ENCODE measurements at regions of chr13 and their contacts with region 1.

Region 1: GRCh38 chr13:22061351-22061805 is 390.5 kb downstream of the FGF9 start:
- DNase-seq: peak; percentile 51
- ATAC-seq: peak; percentile 83
- H3K4me3 ChIP-seq: no peak overlapping the region
- H3K27ac ChIP-seq: peak overlapping the region; percentile 94
- H3K4me1 ChIP-seq: peaks cover 25% of the 10 kb centered on the region
- H3K27me3 ChIP-seq: no peaks in the 10 kb centered on the region
- CTCF ChIP-seq: peak; percentile 15 to 50 (median 41); a peak in 3 of 6 replicates
- EP300 ChIP-seq: peak; percentile 5 to 80; a peak in 3 of 4 replicates
- POLR2A ChIP-seq: peak; percentile 36; the same call in 1 of the 2 replicates
- RAD21 ChIP-seq: peak; percentile 63

Region 2: DNA sequence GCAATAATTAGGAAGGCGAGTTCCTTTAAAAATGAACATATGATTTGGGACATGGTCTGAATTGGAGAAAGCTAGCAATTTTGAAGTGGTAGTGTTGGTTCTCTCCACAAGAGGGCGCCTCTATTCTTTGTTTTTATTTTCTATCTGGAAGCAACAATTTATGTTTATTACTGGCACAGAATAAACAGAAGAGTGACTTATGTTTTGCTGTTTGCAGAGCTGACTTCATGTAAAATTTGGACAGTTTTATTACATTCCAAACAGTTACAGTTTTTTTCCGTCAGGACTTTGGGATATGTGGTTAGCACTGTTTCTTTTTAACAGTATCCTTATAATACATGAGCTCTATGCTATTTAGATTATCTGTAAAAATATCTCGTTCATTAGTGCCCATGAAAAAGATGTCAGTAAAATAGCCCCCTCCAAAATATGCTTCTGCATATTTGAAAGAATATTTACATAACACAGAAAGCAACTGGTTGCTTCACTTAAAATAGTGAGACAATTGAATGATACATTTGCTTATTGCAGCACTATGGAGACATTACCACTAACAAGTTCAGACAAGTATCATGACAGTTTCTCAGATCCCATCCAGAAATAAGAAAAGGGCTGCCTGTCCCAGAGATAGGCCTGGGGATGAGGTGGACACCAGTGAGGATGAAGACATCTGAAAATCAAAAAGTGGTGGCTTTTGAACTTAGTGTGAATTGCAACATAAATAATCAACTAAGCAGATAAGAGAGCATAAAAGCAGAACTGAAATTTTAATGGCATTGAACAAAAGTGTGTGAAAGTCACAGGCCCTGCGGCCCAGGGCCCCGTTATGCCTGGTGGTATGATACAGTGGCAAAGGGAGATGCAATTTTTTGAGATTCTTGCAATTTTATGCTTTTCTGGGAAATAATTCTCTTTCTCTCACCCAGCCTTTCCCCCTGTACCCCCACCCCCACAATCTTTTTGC is 422.8 kb before region 1 on chr13:
- CTCF ChIA-PET with region 1: interaction called, 19 read pairs
- POLR2A ChIA-PET with region 1: no interaction called
- RAD21 ChIA-PET with region 1: interaction called, 8 read pairs
- SMC1A ChIA-PET with region 1: interaction called, 14 read pairs
- in situ Hi-C with region 1: no loop called
- intact Hi-C with region 1: loop called (anchors 2 kb)
- DNase-seq: no peak
- ATAC-seq: peak; percentile 79
- H3K4me3 ChIP-seq: no peak overlapping the region
- H3K27ac ChIP-seq: no peak overlapping the region
- H3K4me1 ChIP-seq: no peaks in the 10 kb centered on the region
- H3K27me3 ChIP-seq: no peaks in the 10 kb centered on the region
- CTCF ChIP-seq: peak; percentile 58 to 67 (median 65)
- EP300 ChIP-seq: no peak
- POLR2A ChIP-seq: no peak
- RAD21 ChIP-seq: peak; percentile 78

Region 3: GRCh38 chr13:21670883-21671619 is 390.3 kb before region 1 on chr13 and contains the start of gene FGF9:
- CTCF ChIA-PET with region 1: no interaction called
- POLR2A ChIA-PET with region 1: no interaction called
- RAD21 ChIA-PET with region 1: no interaction called
- SMC1A ChIA-PET with region 1: no interaction called
- in situ Hi-C with region 1: no loop called
- intact Hi-C with region 1: loop called (anchors 5 kb)
- DNase-seq: peak; percentile 7
- ATAC-seq: peak; percentile 92
- H3K4me3 ChIP-seq: peak within 1 kb of the TSS; percentile 75
- H3K27ac ChIP-seq: no peak within 1 kb of the TSS
- H3K4me1 ChIP-seq: peaks cover 23% of the 10 kb centered on the region
- H3K27me3 ChIP-seq: peaks cover 15 to 31% of the 10 kb centered on the region in 2 experiments
- CTCF ChIP-seq: 0 out of 6 replicates have a peak, but pooled peaks of 1 of the 3 experiments have one; percentile 6
- EP300 ChIP-seq: no peak
- POLR2A ChIP-seq: peak; percentile 77
- RAD21 ChIP-seq: no peak
- polyA plus RNA-seq, gene FGF9: 0.92 to 1.0 TPM

Region 4: GRCh38 chr13:21971662-21972621 is 89.4 kb before region 1 on chr13:
- CTCF ChIA-PET with region 1: no interaction called
- POLR2A ChIA-PET with region 1: no interaction called
- RAD21 ChIA-PET with region 1: no interaction called
- SMC1A ChIA-PET with region 1: no interaction called
- in situ Hi-C with region 1: no loop called
- intact Hi-C with region 1: no loop called
- DNase-seq: no peak
- ATAC-seq: no peak
- H3K4me3 ChIP-seq: no peak overlapping the region
- H3K27ac ChIP-seq: no peak overlapping the region
- H3K4me1 ChIP-seq: no peaks in the 10 kb centered on the region
- H3K27me3 ChIP-seq: no peaks in the 10 kb centered on the region; a peak in 1 of 4 replicates
- CTCF ChIP-seq: no peak
- EP300 ChIP-seq: no peak
- POLR2A ChIP-seq: no peak
- RAD21 ChIP-seq: no peak

Region 5: GRCh38 chr13:22073718-22074117 is 12.3 kb after region 1 on chr13:
- CTCF ChIA-PET with region 1: interaction called, 8 read pairs
- POLR2A ChIA-PET with region 1: interaction called, 3 read pairs
- RAD21 ChIA-PET with region 1: interaction called, 5 read pairs
- SMC1A ChIA-PET with region 1: interaction called, 18 read pairs
- in situ Hi-C with region 1: no loop called
- intact Hi-C with region 1: no loop called
- DNase-seq: peak; percentile 33
- ATAC-seq: peak; percentile 91
- H3K4me3 ChIP-seq: no peak overlapping the region
- H3K27ac ChIP-seq: no peak overlapping the region
- H3K4me1 ChIP-seq: peaks cover 11% of the 10 kb centered on the region; the same call in 1 of the 2 replicates
- H3K27me3 ChIP-seq: no peaks in the 10 kb centered on the region
- CTCF ChIP-seq: no peak
- EP300 ChIP-seq: peak; percentile 70; a peak in 2 of 4 replicates
- POLR2A ChIP-seq: no peak
- RAD21 ChIP-seq: no peak

Region 6: DNA sequence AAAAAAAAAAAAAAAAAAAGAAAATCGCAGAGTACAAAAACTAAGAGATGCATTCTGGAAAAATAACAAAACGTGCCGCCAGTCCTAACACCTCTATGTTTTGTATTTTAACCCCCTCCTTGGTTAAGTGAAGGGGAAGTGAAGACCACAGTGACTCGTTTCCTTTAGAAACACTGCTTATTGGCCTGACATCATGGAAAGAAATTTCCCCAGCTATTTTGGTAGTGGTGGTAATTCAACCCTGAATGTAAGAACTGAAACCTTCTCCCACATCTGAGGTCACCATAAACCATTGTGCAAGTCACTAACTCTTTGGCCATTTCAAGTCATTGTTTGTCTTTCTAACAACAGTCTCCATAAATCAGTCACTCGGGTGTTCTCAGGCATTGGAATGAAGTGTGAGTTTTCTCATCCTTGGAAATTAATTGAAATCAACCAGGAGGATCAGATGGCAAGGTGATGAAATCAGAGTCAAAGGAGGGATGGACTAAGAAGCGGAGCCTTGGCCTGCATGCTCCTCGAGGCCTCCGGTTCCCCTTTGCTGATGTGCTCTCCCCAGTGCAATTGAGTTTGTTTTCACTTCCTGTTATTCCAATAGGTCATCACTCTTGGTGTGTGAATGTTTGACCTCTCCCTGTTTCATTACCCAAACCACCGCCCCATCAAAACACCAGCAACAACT is 53.4 kb after region 1 on chr13:
- CTCF ChIA-PET with region 1: interaction called, 16 read pairs
- POLR2A ChIA-PET with region 1: interaction called, 5 read pairs
- RAD21 ChIA-PET with region 1: interaction called, 30 read pairs
- SMC1A ChIA-PET with region 1: interaction called, 23 read pairs
- in situ Hi-C with region 1: no loop called
- intact Hi-C with region 1: loop called (anchors 1 kb)
- DNase-seq: peak; percentile 99
- ATAC-seq: peak; percentile 92
- H3K4me3 ChIP-seq: no peak overlapping the region
- H3K27ac ChIP-seq: peak overlapping the region; percentile 78
- H3K4me1 ChIP-seq: peaks cover 18% of the 10 kb centered on the region
- H3K27me3 ChIP-seq: no peaks in the 10 kb centered on the region
- CTCF ChIP-seq: no peak
- EP300 ChIP-seq: peak; percentile 99 to 100
- POLR2A ChIP-seq: peak; percentile 58; the same call in 1 of the 2 replicates
- RAD21 ChIP-seq: peak; percentile 17; the same call in 1 of the 2 replicates

Region 7: DNA sequence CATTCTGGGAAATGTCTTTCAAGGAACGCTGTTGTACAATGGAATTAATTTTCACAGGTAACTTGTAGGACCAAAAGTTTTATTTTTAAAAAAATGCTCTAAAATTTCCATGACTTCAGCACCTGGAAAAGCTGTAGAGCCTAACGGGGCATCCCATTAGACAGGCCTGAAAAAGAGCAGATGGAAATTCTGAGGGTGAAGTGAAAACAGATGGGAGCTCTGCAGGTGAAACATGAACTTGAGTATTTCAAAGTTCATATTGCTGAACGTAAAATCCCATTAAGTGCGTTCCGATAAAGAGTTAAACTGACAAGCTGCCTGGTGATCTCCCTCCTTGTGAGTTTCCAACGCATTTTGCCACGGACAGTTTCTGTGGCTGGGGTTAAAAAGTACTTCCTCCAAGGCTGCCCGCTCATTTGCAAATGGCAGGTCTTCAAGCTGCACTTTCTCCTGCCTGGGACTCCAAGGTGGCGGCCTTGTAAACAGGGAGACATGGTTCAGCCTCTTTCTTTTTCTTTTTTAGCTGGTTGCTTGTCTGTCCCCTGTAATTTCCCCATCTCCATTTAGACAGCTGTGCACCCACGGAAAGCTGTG is 59.9 kb after region 1 on chr13:
- CTCF ChIA-PET with region 1: interaction called, 15 read pairs
- POLR2A ChIA-PET with region 1: interaction called, 3 read pairs
- RAD21 ChIA-PET with region 1: interaction called, 15 read pairs
- SMC1A ChIA-PET with region 1: interaction called, 4 read pairs
- in situ Hi-C with region 1: no loop called
- intact Hi-C with region 1: no loop called
- DNase-seq: peak; percentile 49
- ATAC-seq: peak; percentile 79
- H3K4me3 ChIP-seq: no peak overlapping the region
- H3K27ac ChIP-seq: peak overlapping the region; percentile 33; the same call in 1 of the 2 replicates
- H3K4me1 ChIP-seq: peaks cover 24% of the 10 kb centered on the region
- H3K27me3 ChIP-seq: no peaks in the 10 kb centered on the region
- CTCF ChIP-seq: no peak
- EP300 ChIP-seq: peak in 1 of 2 experiments; percentile 42; a peak in 1 of 4 replicates
- POLR2A ChIP-seq: no peak
- RAD21 ChIP-seq: no peak

Region 8: DNA sequence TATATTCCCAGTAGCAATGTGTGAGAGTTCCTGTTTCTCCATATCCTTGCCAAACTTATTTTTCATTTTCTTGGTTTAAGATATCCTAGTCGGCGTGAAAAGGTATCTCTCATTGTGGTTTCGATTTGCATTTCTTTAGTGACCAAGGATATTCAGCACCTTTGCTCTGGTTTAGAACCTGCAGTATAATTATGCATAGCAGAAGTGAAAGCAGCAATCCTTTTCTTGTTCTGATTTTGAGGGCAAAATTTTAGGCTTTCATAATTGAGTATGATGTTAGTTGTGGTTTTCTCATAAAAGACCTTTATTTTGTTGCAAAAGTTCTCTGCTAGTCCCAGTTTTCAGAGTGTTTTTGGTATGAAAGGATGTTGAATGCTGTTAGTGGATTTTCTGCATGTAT is 100.5 kb after region 1 on chr13:
- CTCF ChIA-PET with region 1: no interaction called
- POLR2A ChIA-PET with region 1: no interaction called
- RAD21 ChIA-PET with region 1: no interaction called
- SMC1A ChIA-PET with region 1: no interaction called
- in situ Hi-C with region 1: no loop called
- intact Hi-C with region 1: loop called (anchors 5 kb)
- DNase-seq: peak; percentile 74
- ATAC-seq: peak; percentile 93
- H3K4me3 ChIP-seq: peak overlapping the region; percentile 41; the same call in 1 of the 2 replicates
- H3K27ac ChIP-seq: peak overlapping the region; percentile 64
- H3K4me1 ChIP-seq: peaks cover 16% of the 10 kb centered on the region
- H3K27me3 ChIP-seq: no peaks in the 10 kb centered on the region
- CTCF ChIP-seq: no peak
- EP300 ChIP-seq: peak; percentile 87 to 98; a peak in 3 of 4 replicates
- POLR2A ChIP-seq: no peak
- RAD21 ChIP-seq: no peak

Region 9: GRCh38 chr13:22618002-22618401 is 556.6 kb after region 1 on chr13:
- CTCF ChIA-PET with region 1: no interaction called
- POLR2A ChIA-PET with region 1: no interaction called
- RAD21 ChIA-PET with region 1: no interaction called
- SMC1A ChIA-PET with region 1: no interaction called
- in situ Hi-C with region 1: no loop called
- intact Hi-C with region 1: no loop called
- DNase-seq: no peak
- ATAC-seq: no peak
- H3K4me3 ChIP-seq: no peak overlapping the region
- H3K27ac ChIP-seq: no peak overlapping the region
- H3K4me1 ChIP-seq: no peaks in the 10 kb centered on the region
- H3K27me3 ChIP-seq: no peaks in the 10 kb centered on the region
- CTCF ChIP-seq: no peak
- EP300 ChIP-seq: no peak
- POLR2A ChIP-seq: no peak
- RAD21 ChIP-seq: no peak

Measured in GM12878 (cell line).